ENCODE measurements at regions of chr19 and their contacts with region 1.

Region 1: GRCh38 chr19:32580901-32581703 is at the start of gene PDCD5:
- DNase-seq: peak; percentile 88 to 96 (median 93)
- ATAC-seq: peak; percentile 98
- H3K4me3 ChIP-seq: peak within 1 kb of the TSS; percentile 91
- H3K4me3 Mint-ChIP-seq: peak within 1 kb of the TSS; percentile 89 to 99 (median 94)
- H3K27ac ChIP-seq: peak within 1 kb of the TSS; percentile 77
- H3K27ac Mint-ChIP-seq: peak within 1 kb of the TSS; percentile 75 to 95 (median 90)
- H3K4me1 ChIP-seq: peaks cover 13 to 19% of the 10 kb centered on the region in 2 donors
- H3K4me1 Mint-ChIP-seq: peaks cover 10 to 46% (median 36%) of the 10 kb centered on the region in 7 donors
- H3K27me3 ChIP-seq: no peaks in the 10 kb centered on the region
- H3K27me3 Mint-ChIP-seq: peaks cover 0 to 20% (median 0%) of the 10 kb centered on the region in 5 donors
- total RNA-seq, gene PDCD5: 19.5 to 98.0 (median 51.2) TPM

Region 2: DNA sequence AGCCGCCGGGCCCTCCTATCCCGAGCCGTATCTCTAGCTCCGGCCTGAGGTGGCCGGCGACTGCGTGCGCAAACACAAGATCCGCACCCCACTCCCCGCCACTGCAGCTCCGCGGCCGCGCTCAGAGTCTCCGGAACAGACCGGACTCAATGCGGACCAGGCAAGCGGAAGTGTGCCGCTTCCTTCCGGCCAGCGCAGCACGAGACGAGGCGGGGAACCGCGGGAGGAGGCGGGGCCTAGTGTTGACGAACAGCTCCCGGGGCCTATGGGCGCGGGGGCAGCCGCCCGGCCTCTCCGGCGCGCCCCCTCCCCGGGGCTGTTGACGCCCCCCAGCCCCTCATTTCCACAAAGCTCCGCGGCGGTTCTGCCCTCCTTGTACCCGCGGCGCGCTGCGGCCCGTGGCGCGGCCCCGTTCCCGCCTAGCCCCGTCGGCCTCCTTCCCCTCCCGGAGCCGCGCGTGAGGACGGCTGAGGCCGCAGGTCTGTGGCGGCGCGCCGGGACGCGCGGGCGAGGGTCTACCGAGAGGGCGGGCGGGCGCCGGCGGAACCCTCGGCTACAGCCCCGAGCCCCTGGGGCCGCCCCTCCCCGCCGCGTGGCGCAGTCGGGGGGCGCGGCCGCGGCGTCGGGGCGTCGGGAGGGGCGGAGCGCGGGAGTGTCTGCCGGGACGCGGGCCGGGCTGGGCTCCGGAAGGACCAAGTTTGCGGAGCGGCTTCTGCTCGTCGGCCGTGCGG is 175.5 kb before region 1 on chr19 and contains the start of gene DPY19L3:
- CTCF ChIA-PET with region 1: no interaction called
- POLR2A ChIA-PET with region 1: interaction called, 12 read pairs
- intact Hi-C with region 1: loop called (anchors 1 kb)
- DNase-seq: peak; percentile 74 to 96 (median 82)
- ATAC-seq: peak; percentile 95
- H3K4me3 ChIP-seq: peak within 1 kb of the TSS; percentile 85
- H3K4me3 Mint-ChIP-seq: peak within 1 kb of the TSS; percentile 83 to 93 (median 88)
- H3K27ac ChIP-seq: peak within 1 kb of the TSS; percentile 90
- H3K27ac Mint-ChIP-seq: peak within 1 kb of the TSS; percentile 86 to 91 (median 89)
- H3K4me1 ChIP-seq: peaks cover 4 to 12% of the 10 kb centered on the region in 2 donors
- H3K4me1 Mint-ChIP-seq: peaks cover 8 to 34% (median 17%) of the 10 kb centered on the region in 7 donors
- H3K27me3 ChIP-seq: no peaks in the 10 kb centered on the region
- H3K27me3 Mint-ChIP-seq: no peaks in the 10 kb centered on the region
- total RNA-seq, gene DPY19L3: 8.4 to 19.3 (median 15.8) TPM

Region 3: DNA sequence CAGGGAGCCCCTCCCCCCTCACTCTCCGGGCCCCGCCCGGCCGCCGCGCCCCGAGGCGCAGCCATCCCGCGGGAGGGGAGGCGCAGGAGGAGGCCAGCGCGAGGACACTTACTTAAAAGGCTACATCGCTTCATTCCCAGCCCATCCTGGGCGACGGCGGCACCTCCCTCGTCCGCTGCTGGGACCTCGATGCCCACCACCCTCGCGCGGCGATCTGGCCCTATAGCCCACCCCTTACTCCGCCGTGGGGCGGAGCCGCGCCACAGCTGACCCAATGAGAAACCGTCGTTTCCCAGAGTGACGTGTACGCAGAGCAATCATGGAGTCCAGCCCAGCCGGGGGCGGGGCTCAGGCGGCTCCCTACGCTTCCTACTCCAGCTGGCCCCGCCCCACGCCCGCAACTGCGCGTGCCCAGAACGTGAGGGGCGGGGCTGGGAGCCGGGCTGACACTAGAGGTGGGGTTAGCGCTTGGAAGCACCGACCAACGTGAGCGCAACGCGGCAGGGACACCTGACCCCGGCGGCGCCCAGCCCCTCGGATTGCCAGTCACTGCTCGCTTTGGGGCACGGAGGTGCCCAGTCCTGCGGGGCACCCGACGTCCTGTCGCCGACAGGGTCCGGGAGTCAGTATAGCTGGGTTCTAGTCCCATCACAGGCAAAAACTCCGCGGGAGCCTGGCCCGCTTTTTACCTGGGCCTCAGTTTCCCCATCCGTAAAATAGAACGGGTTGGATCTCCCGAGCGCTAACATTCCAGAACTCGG is 94.0 kb after region 1 on chr19 and contains the start of gene ANKRD27:
- CTCF ChIA-PET with region 1: interaction called, 3 read pairs
- POLR2A ChIA-PET with region 1: no interaction called
- intact Hi-C with region 1: loop called (anchors 1 kb)
- DNase-seq: peak; percentile 96 to 100 (median 98)
- ATAC-seq: peak; percentile 96
- H3K4me3 ChIP-seq: peak within 1 kb of the TSS; percentile 97
- H3K4me3 Mint-ChIP-seq: peak within 1 kb of the TSS; percentile 90 to 98 (median 96)
- H3K27ac ChIP-seq: peak within 1 kb of the TSS; percentile 67
- H3K27ac Mint-ChIP-seq: peak within 1 kb of the TSS; percentile 70 to 90 (median 83)
- H3K4me1 ChIP-seq: peaks cover 10 to 14% of the 10 kb centered on the region in 2 donors
- H3K4me1 Mint-ChIP-seq: peaks cover 25 to 44% (median 36%) of the 10 kb centered on the region in 7 donors
- H3K27me3 ChIP-seq: no peaks in the 10 kb centered on the region
- H3K27me3 Mint-ChIP-seq: peaks cover 6 to 35% (median 8%) of the 10 kb centered on the region in 5 donors
- total RNA-seq, gene ANKRD27: 23.6 to 44.9 (median 41.2) TPM

Region 4: GRCh38 chr19:32971715-32972540 is 390.8 kb after region 1 on chr19 and contains the starts of genes CEP89 and FAAP24:
- CTCF ChIA-PET with region 1: no interaction called
- POLR2A ChIA-PET with region 1: interaction called, 4 read pairs
- intact Hi-C with region 1: loop called (anchors 1 to 5 kb)
- DNase-seq: peak; percentile 89 to 99 (median 98)
- ATAC-seq: peak; percentile 98
- H3K4me3 ChIP-seq: peak within 1 kb of the TSS; percentile 78
- H3K4me3 Mint-ChIP-seq: peak within 1 kb of the TSS; percentile 96 to 100 (median 99)
- H3K27ac ChIP-seq: peak within 1 kb of the TSS; percentile 75
- H3K27ac Mint-ChIP-seq: peak within 1 kb of the TSS; percentile 92 to 97 (median 97)
- H3K4me1 ChIP-seq: peaks cover 0 to 5% of the 10 kb centered on the region in 2 donors
- H3K4me1 Mint-ChIP-seq: peaks cover 14 to 27% (median 20%) of the 10 kb centered on the region in 7 donors
- H3K27me3 ChIP-seq: no peaks in the 10 kb centered on the region
- H3K27me3 Mint-ChIP-seq: no peaks in the 10 kb centered on the region
- total RNA-seq, gene CEP89: 7.4 to 22.4 (median 20.1) TPM
- total RNA-seq, gene FAAP24: 0.71 to 7.2 (median 2.5) TPM

Region 5: GRCh38 chr19:33373701-33374421 is 792.8 kb after region 1 on chr19 and contains the start of gene CEBPG:
- CTCF ChIA-PET with region 1: no interaction called
- POLR2A ChIA-PET with region 1: no interaction called
- intact Hi-C with region 1: loop called in 1 of 2 experiments (anchors 2 kb)
- DNase-seq: peak in 2 of 9 donors; percentile 57 to 68
- ATAC-seq: peak; percentile 52
- H3K4me3 ChIP-seq: peak within 1 kb of the TSS; percentile 93
- H3K4me3 Mint-ChIP-seq: peak within 1 kb of the TSS; percentile 87 to 95 (median 92)
- H3K27ac ChIP-seq: peak within 1 kb of the TSS; percentile 98
- H3K27ac Mint-ChIP-seq: peak within 1 kb of the TSS; percentile 73 to 97 (median 85)
- H3K4me1 ChIP-seq: peaks cover 16 to 19% of the 10 kb centered on the region in 2 donors
- H3K4me1 Mint-ChIP-seq: peaks cover 36 to 52% (median 48%) of the 10 kb centered on the region in 7 donors
- H3K27me3 ChIP-seq: no peaks in the 10 kb centered on the region
- H3K27me3 Mint-ChIP-seq: peaks cover 0 to 3% (median 0%) of the 10 kb centered on the region in 5 donors
- total RNA-seq, gene CEBPG: 17.1 to 22.4 (median 21.1) TPM